Panc1 (cell line): ENCODE measurements at regions of chr3 and their contacts with region 1.

Region 1: GRCh38 chr3:11582191-11582968 is 61.3 kb downstream of the VGLL4 start:
- DNase-seq: no peak
- ATAC-seq: peak; percentile 86
- H3K4me3 ChIP-seq: peak overlapping the region; percentile 27 to 52
- H3K27ac ChIP-seq: peak overlapping the region; percentile 95
- H3K4me1 ChIP-seq: peaks cover 67% of the 10 kb centered on the region
- H3K27me3 ChIP-seq: no peaks in the 10 kb centered on the region
- CTCF ChIP-seq: no peak

Region 2: GRCh38 chr3:11300970-11301369 is 281.4 kb before region 1 on chr3:
- CTCF ChIA-PET with region 1: no interaction called
- POLR2A ChIA-PET with region 1: no interaction called
- in situ Hi-C with region 1: no loop called
- intact Hi-C with region 1: no loop called
- DNase-seq: no peak
- ATAC-seq: no peak
- H3K4me3 ChIP-seq: no peak overlapping the region
- H3K27ac ChIP-seq: no peak overlapping the region
- H3K4me1 ChIP-seq: no peaks in the 10 kb centered on the region
- H3K27me3 ChIP-seq: no peaks in the 10 kb centered on the region
- CTCF ChIP-seq: no peak

Region 3: DNA sequence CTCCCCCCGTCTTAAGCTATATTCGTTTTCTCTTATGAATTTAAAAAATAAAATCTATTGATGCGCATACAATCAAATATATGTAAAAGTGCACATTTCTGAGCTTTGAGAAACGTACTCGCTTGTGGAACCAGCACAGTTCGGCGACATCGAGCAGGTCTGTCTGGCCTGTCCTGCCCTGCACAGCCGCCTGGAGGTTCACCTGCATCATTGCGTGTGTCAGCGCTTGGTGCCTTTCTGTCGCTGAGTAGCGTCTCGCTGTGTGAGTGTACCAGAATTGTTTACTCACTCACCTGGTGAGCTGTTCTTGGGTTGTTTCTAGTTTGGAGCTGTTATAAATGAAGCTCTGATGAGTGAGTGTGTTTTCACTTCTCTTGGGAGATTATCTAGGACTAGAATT is 42.7 kb before region 1 on chr3:
- CTCF ChIA-PET with region 1: no interaction called
- POLR2A ChIA-PET with region 1: no interaction called
- in situ Hi-C with region 1: no loop called
- intact Hi-C with region 1: no loop called
- DNase-seq: no peak
- ATAC-seq: 0 out of 2 replicates have a peak, but pooled peaks have one; percentile 35
- H3K4me3 ChIP-seq: no peak overlapping the region
- H3K27ac ChIP-seq: peak overlapping the region; percentile 48; the same call in 1 of the 2 replicates
- H3K4me1 ChIP-seq: peaks cover 8% of the 10 kb centered on the region
- H3K27me3 ChIP-seq: no peaks in the 10 kb centered on the region
- CTCF ChIP-seq: no peak

Region 4: DNA sequence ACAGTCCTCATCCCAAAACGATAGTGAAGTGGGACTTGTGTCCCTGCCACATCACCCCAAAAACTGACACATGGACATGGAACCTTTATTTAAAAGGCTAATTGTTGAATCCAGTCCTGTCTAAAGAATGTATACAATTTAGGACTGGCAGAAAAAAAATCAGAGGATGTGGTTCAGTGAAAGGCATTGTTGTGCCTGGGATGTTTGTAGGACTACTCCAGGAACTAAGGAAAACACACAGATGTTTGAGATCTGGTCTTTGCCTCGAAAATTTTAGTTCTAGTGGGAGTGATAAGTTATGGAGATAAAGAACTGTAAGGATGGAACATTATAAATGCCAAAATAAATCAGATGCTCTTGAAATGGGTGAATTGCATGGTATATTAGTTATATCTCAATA is 34.2 kb after region 1 on chr3:
- CTCF ChIA-PET with region 1: interaction called, 3 read pairs
- POLR2A ChIA-PET with region 1: interaction called, 10 read pairs
- in situ Hi-C with region 1: no loop called
- intact Hi-C with region 1: no loop called
- DNase-seq: no peak
- ATAC-seq: no peak
- H3K4me3 ChIP-seq: no peak overlapping the region
- H3K27ac ChIP-seq: peak overlapping the region; percentile 71
- H3K4me1 ChIP-seq: peaks cover 100% of the 10 kb centered on the region
- H3K27me3 ChIP-seq: no peaks in the 10 kb centered on the region
- CTCF ChIP-seq: no peak

Region 5: DNA sequence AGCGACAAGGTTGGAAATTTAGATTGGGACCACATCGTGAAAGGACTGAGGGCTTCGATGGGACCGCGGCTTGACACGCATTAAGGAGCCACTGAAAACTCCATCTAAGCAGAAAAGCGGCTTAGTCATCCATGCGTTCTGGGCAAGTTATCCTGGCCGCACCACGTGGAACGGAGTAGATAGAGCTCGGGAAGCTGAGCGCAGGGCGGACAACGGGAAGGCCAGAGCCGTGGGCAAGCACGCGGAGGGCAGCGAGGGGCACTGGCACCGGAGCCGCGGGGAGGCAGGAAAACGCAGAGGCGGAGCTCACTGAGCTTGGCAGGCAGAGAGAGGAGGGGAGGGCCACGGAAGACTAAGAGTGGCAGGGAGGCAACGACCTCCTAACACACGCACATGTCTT is 122.7 kb after region 1 on chr3:
- CTCF ChIA-PET with region 1: no interaction called
- POLR2A ChIA-PET with region 1: no interaction called
- in situ Hi-C with region 1: no loop called
- intact Hi-C with region 1: no loop called
- DNase-seq: no peak
- ATAC-seq: no peak
- H3K4me3 ChIP-seq: no peak overlapping the region
- H3K27ac ChIP-seq: no peak overlapping the region
- H3K4me1 ChIP-seq: no peaks in the 10 kb centered on the region
- H3K27me3 ChIP-seq: no peaks in the 10 kb centered on the region
- CTCF ChIP-seq: no peak